RWPE1 (cell line): ENCODE measurements at regions of chr5 and their contacts with region 1.

Region 1: DNA sequence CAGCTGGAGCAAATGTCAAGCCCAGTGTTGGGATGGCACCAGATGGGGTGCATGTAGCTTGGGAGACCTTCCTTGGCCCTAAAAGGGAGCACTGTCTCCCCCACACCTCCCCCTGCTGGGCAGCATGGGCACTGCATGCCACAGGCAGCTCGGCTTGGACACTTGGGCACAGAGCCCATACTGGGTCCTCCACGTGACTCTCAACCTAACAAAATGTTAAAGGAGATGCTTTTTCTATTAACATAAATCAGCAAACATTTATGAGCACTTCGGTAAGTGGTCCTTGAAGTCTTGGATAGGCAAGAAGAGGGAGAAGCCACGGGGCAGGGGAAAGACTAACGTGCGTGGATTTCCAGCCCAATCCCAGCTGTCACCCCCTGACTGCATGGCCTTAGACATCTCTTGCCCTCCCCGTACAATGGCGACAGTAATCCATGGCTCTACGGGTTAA is 23.9 kb upstream of the MAPK9 start:
- DNase-seq: no peak
- H3K27ac ChIP-seq: no peak overlapping the region
- CTCF ChIP-seq: peak; percentile 79

Region 2: GRCh38 chr5:180304431-180305375 is 11.1 kb before region 1 on chr5:
- CTCF ChIA-PET with region 1: interaction called, 18 read pairs
- POLR2A ChIA-PET with region 1: no interaction called
- DNase-seq: no peak
- H3K27ac ChIP-seq: no peak overlapping the region
- CTCF ChIP-seq: no peak

Region 3: DNA sequence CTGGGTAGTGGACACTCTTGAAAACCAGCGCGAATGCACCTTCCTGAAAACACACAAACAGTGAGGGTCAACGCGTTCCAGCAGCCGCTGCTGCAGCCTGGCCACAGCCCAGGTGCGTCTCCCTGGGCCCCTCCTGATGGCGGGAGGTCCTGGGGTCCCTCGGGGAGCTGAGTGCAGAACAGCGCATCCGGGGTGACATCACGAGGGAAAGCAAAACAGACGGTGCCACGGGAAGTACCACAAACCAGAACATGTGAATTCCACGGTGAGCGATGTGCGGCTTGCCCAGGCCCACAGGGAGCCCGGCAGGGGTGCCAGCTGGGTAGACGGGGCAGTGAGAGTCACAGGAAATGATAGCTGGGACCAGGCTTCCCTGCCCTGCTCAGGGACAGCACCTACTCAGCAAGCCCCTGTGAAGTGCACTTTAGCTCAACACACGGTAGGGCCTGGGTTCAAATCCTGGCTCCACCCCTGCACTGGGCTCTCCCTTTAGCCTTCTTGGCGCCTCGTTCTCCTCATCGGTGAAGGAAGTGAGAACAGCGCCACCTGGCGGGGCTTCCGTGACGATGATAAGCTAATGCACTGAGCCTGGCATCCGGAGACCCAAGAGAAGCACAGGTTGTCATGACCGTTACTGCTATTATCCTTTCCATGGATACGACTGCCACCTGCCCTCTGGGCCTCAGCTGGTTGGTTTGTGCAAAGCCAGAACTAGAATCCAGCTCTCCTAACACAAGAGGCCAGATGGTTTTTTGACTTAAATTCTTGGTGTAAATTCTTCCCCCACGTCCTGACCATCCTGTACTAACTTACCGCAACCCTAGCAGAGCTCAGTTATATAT is 12.7 kb after region 1 on chr5:
- CTCF ChIA-PET with region 1: interaction called, 18 read pairs
- POLR2A ChIA-PET with region 1: interaction called, 5 read pairs
- DNase-seq: peak; percentile 76
- H3K27ac ChIP-seq: no peak overlapping the region
- CTCF ChIP-seq: peak; percentile 91

Region 4: GRCh38 chr5:180470966-180471582 is 155.3 kb after region 1 on chr5:
- CTCF ChIA-PET with region 1: interaction called, 21 read pairs
- POLR2A ChIA-PET with region 1: no interaction called
- DNase-seq: peak; percentile 72
- H3K27ac ChIP-seq: no peak overlapping the region
- CTCF ChIP-seq: peak; percentile 98

Region 5: GRCh38 chr5:180675036-180675635 is 359.3 kb after region 1 on chr5:
- CTCF ChIA-PET with region 1: interaction called, 10 read pairs
- POLR2A ChIA-PET with region 1: no interaction called
- DNase-seq: no peak
- H3K27ac ChIP-seq: no peak overlapping the region
- CTCF ChIP-seq: no peak